ENCODE measurements at regions of chr16 and their contacts with region 1.

Region 1: DNA sequence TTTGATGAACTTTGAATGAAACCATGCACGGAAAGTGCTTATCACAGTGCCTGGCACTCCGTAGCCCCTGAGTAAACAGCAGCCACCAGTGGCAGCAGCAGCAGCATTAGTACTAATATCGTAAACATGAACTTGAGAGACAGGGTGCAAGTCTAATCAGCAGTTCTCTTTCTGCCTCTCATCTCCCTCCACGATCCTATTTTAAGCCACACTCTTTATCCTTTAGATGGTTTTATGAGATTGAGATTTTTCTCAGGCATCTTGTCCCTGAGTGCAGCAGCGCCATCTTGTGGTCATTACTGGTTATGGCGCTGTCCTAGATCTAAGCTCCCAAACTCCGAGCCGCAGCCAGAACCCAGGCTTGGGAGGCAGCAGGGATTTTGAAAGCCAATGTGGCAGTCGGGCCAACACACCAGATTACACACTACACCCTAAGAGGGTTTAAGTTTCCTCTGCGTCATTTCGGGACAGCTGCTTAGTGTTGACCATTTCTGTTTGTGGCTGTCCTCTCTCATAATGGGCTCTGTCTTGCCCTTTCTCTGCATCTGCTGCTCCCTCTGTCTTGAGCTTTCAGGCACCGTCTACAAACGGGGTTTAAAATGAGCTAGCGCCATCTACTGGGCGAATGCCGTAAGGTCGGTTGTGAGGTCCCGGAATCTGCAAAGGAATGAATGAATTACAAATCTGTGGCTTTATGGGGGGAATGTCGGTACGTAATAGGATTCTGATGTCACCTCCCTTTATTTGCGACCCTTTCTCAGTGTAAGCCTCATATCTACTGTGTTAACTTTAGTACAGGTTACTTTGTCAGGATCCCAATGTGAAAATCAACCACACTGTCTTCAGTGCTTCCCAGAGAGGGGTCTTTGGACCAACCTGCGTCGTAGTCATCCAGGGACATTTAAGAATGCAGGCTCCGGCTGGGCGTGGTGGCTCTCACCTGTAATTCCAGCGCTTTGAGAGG is 64.5 kb downstream of the CYLD start:
- DNase-seq: peak; percentile 86
- ATAC-seq: peak; percentile 96
- H3K4me3 ChIP-seq: peak overlapping the region; percentile 35 to 50
- H3K27ac ChIP-seq: no peak overlapping the region
- H3K4me1 ChIP-seq: peaks cover 0 to 3% of the 10 kb centered on the region in 2 experiments; a peak in 1 of 4 replicates
- H3K27me3 ChIP-seq: no peaks in the 10 kb centered on the region
- CTCF ChIP-seq: peak; percentile 77 to 97 (median 93)
- POLR2A ChIP-seq: no peak
- RAD21 ChIP-seq: peak; percentile 69

Region 2: DNA sequence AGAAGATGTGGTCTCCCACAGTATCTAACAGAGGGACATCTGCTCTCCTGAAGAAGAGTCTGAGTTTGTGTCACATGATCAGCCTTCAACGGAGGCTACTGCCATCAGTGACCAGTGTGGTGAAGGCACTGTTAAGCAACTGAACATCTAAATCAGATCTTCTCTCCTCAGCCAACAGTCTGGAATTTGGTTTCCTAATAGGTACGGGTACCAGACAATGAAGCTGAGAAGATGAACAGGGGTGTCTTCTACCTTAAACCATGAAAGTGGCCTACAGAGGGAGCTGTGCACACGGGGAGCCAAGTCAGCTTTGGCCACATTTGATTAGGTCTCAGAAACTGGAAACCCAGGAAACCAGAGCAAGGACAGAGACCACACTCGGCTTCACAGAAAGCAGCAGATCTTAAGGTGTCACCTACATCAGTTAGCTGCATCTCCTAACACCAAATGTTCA is 479.4 kb before region 1 on chr16:
- CTCF ChIA-PET with region 1: interaction called, 7 read pairs
- POLR2A ChIA-PET with region 1: no interaction called
- RAD21 ChIA-PET with region 1: interaction called in 1 of 2 experiments, 4 read pairs
- intact Hi-C with region 1: loop called (anchors 1 kb)
- DNase-seq: peak; percentile 31
- ATAC-seq: peak; percentile 81
- H3K4me3 ChIP-seq: no peak overlapping the region
- H3K27ac ChIP-seq: no peak overlapping the region
- H3K4me1 ChIP-seq: no peaks in the 10 kb centered on the region
- H3K27me3 ChIP-seq: no peaks in the 10 kb centered on the region
- CTCF ChIP-seq: peak; percentile 26 to 71 (median 67); a peak in 5 of 6 replicates
- POLR2A ChIP-seq: no peak
- RAD21 ChIP-seq: peak; percentile 57

Region 3: GRCh38 chr16:50373780-50374179 is 432.6 kb before region 1 on chr16:
- CTCF ChIA-PET with region 1: interaction called, 21 read pairs
- POLR2A ChIA-PET with region 1: interaction called, 4 read pairs
- RAD21 ChIA-PET with region 1: interaction called in 1 of 2 experiments, 3 read pairs
- intact Hi-C with region 1: loop called (anchors 1 kb)
- DNase-seq: no peak
- ATAC-seq: no peak
- H3K4me3 ChIP-seq: no peak overlapping the region
- H3K27ac ChIP-seq: no peak overlapping the region
- H3K4me1 ChIP-seq: peaks cover 3 to 24% of the 10 kb centered on the region in 2 experiments; a peak in 3 of 4 replicates
- H3K27me3 ChIP-seq: no peaks in the 10 kb centered on the region
- CTCF ChIP-seq: no peak
- POLR2A ChIP-seq: no peak
- RAD21 ChIP-seq: no peak

Region 4: GRCh38 chr16:50747207-50747956 is 59.0 kb before region 1 on chr16:
- CTCF ChIA-PET with region 1: interaction called, 14 read pairs
- POLR2A ChIA-PET with region 1: no interaction called
- RAD21 ChIA-PET with region 1: no interaction called
- intact Hi-C with region 1: no loop called
- DNase-seq: peak; percentile 15
- ATAC-seq: peak; percentile 65
- H3K4me3 ChIP-seq: no peak overlapping the region
- H3K27ac ChIP-seq: no peak overlapping the region
- H3K4me1 ChIP-seq: peaks cover 0 to 7% of the 10 kb centered on the region in 2 experiments; a peak in 1 of 4 replicates
- H3K27me3 ChIP-seq: no peaks in the 10 kb centered on the region
- CTCF ChIP-seq: peak in 2 of 3 experiments; percentile 32 to 52; a peak in 3 of 6 replicates
- POLR2A ChIP-seq: no peak
- RAD21 ChIP-seq: peak; percentile 61

Region 5: DNA sequence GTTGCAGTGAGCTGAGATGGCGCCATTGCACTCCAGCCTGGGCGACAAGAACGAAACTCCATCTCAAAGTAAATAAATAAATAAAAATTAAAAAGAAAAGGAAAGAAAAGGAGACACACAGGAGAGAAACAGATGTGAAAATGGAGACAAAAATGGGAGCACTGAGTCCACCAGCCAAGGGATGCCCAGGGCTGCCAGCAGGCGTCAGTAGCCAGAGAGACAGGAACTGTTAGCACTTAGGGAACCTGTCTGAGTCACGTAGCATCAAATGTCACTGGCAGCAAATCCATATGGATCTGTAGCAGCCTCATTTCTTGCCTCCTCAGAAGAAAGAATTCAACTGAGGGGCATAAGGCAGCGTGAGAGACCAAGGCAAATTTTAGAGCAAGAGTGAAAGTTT is 15.2 kb after region 1 on chr16:
- CTCF ChIA-PET with region 1: interaction called, 17 read pairs
- POLR2A ChIA-PET with region 1: no interaction called
- RAD21 ChIA-PET with region 1: no interaction called
- intact Hi-C with region 1: no loop called
- DNase-seq: peak; percentile 16
- ATAC-seq: peak; percentile 82
- H3K4me3 ChIP-seq: no peak overlapping the region
- H3K27ac ChIP-seq: no peak overlapping the region
- H3K4me1 ChIP-seq: no peaks in the 10 kb centered on the region
- H3K27me3 ChIP-seq: 0 out of 2 replicates have a peak, but pooled peaks cover 4% of the 10 kb centered on the region
- CTCF ChIP-seq: peak in 2 of 3 experiments; percentile 32 to 51; a peak in 4 of 6 replicates
- POLR2A ChIP-seq: no peak
- RAD21 ChIP-seq: peak; percentile 29; the same call in 1 of the 2 replicates

Measured in HCT116 (cell line).